ENCODE measurements at regions of chr1 and their contacts with region 1.

Region 1: DNA sequence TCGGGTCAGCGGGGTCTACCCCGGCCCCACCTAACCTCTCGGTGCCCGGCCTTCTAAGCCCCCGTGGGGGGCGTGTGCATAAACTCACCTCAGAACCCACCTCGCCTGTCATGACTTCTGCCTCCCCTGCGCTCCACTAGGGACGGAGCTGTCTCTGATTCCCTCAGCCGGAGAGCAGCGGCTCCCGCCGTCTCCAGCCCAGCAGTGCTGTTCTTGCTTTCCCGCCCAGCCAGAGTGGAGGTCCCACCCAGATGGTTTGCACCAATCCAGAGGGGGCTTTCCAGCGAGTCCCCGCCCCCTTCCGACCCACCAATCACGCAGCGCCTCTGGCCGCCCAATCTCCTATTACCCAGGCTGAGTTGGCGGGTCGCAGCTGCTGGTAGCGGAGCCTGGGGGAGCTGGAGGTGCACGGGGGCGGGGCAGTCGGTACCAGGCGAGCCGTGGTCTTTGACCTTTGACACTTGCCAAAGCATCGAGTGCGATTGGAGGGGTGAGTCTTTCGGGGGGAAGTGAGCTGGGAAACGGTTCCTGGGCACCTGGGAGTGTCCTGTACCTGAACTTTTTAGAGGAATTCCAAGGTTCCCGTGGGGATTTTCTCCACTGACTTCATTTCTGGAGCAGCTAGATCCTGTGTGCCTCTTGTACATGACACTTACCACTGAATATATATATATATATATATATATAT is at the start of gene CLSPN:
- DNase-seq: peak; percentile 96
- H3K4me3 Mint-ChIP-seq: peak within 1 kb of the TSS; percentile 99
- H3K27ac Mint-ChIP-seq: peak within 1 kb of the TSS; percentile 69
- H3K4me1 Mint-ChIP-seq: no peaks in the 10 kb centered on the region
- H3K27me3 Mint-ChIP-seq: no peaks in the 10 kb centered on the region
- CTCF ChIP-seq: no peak
- total RNA-seq, gene CLSPN: 1.6 and 4.3 TPM in 2 replicates

Region 2: GRCh38 chr1:35557292-35558063 is 212.4 kb before region 1 on chr1 and contains the starts of genes KIAA0319L and NCDN:
- CTCF ChIA-PET with region 1: interaction called, 5 read pairs
- POLR2A ChIA-PET with region 1: interaction called, 23 read pairs
- intact Hi-C with region 1: no loop called
- DNase-seq: peak; percentile 97
- H3K4me3 Mint-ChIP-seq: peak within 1 kb of the TSS; percentile 94
- H3K27ac Mint-ChIP-seq: peak within 1 kb of the TSS; percentile 93
- H3K4me1 Mint-ChIP-seq: peaks cover 50% of the 10 kb centered on the region
- H3K27me3 Mint-ChIP-seq: no peaks in the 10 kb centered on the region
- CTCF ChIP-seq: no peak
- total RNA-seq, gene KIAA0319L: 50.7 and 56.8 TPM in 2 replicates
- total RNA-seq, gene NCDN: 31.4 and 31.5 TPM in 2 replicates

Region 3: GRCh38 chr1:35564037-35564883 is 205.6 kb before region 1 on chr1:
- CTCF ChIA-PET with region 1: interaction called, 20 read pairs
- POLR2A ChIA-PET with region 1: interaction called, 11 read pairs
- intact Hi-C with region 1: loop called (anchors 1 kb)
- DNase-seq: peak; percentile 90
- H3K4me3 Mint-ChIP-seq: no peak overlapping the region
- H3K27ac Mint-ChIP-seq: no peak overlapping the region
- H3K4me1 Mint-ChIP-seq: peaks cover 32% of the 10 kb centered on the region
- H3K27me3 Mint-ChIP-seq: no peaks in the 10 kb centered on the region
- CTCF ChIP-seq: peak; percentile 79

Region 4: GRCh38 chr1:35569936-35570335 is 200.0 kb before region 1 on chr1:
- CTCF ChIA-PET with region 1: interaction called, 20 read pairs
- POLR2A ChIA-PET with region 1: interaction called, 11 read pairs
- intact Hi-C with region 1: loop called (anchors 1 kb)
- DNase-seq: no peak
- H3K4me3 Mint-ChIP-seq: no peak overlapping the region
- H3K27ac Mint-ChIP-seq: no peak overlapping the region
- H3K4me1 Mint-ChIP-seq: peaks cover 18% of the 10 kb centered on the region
- H3K27me3 Mint-ChIP-seq: peaks cover 9% of the 10 kb centered on the region
- CTCF ChIP-seq: no peak

Region 5: DNA sequence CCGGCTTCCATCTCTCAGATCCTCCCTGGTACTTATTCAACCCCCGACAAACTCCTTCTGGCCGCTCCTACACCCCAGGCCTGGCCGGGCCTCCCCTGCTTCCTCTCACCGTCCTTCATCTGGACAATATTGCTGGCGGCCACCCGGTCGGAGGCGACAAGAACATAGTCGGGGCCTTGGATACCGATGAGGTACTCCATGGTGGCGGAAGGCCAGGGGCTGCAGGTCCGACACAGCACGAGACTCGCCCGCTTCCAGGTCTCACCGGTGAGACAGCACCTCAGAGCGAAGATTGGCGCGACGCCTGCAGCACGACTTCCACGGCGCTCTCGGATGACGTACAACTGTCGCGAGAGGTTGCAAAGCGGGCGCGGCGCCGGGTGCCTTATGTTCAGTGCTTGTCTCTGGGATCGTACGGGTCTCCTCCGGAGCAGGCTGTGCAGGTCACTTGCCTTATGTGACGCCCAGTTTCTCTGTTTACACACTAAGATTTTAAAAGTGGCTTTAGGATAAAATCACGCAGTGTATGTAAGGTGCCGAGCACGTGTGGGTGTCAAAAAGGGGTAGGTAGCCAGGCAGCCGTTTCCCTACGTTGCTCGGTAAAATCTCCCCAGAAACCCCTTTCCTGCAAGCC is 128.6 kb before region 1 on chr1 and contains the start of gene PSMB2:
- CTCF ChIA-PET with region 1: no interaction called
- POLR2A ChIA-PET with region 1: interaction called, 10 read pairs
- intact Hi-C with region 1: no loop called
- DNase-seq: peak; percentile 96
- H3K4me3 Mint-ChIP-seq: peak within 1 kb of the TSS; percentile 99
- H3K27ac Mint-ChIP-seq: peak within 1 kb of the TSS; percentile 100
- H3K4me1 Mint-ChIP-seq: peaks cover 7% of the 10 kb centered on the region
- H3K27me3 Mint-ChIP-seq: peaks cover 12% of the 10 kb centered on the region
- CTCF ChIP-seq: no peak
- total RNA-seq, gene PSMB2: 82.6 and 93.9 TPM in 2 replicates

Region 6: GRCh38 chr1:35747938-35748702 is 21.8 kb before region 1 on chr1:
- CTCF ChIA-PET with region 1: interaction called, 4 read pairs
- POLR2A ChIA-PET with region 1: interaction called, 20 read pairs
- intact Hi-C with region 1: no loop called
- DNase-seq: no peak
- H3K4me3 Mint-ChIP-seq: no peak overlapping the region
- H3K27ac Mint-ChIP-seq: no peak overlapping the region
- H3K4me1 Mint-ChIP-seq: no peaks in the 10 kb centered on the region
- H3K27me3 Mint-ChIP-seq: no peaks in the 10 kb centered on the region
- CTCF ChIP-seq: no peak

Region 7: GRCh38 chr1:35930593-35931445 is 160.9 kb after region 1 on chr1 and contains the start of gene AGO3:
- CTCF ChIA-PET with region 1: no interaction called
- POLR2A ChIA-PET with region 1: interaction called, 14 read pairs
- intact Hi-C with region 1: no loop called
- DNase-seq: peak; percentile 85
- H3K4me3 Mint-ChIP-seq: peak within 1 kb of the TSS; percentile 82
- H3K27ac Mint-ChIP-seq: peak within 1 kb of the TSS; percentile 93
- H3K4me1 Mint-ChIP-seq: peaks cover 19% of the 10 kb centered on the region
- H3K27me3 Mint-ChIP-seq: no peaks in the 10 kb centered on the region
- CTCF ChIP-seq: no peak
- total RNA-seq, gene AGO3: 27.3 and 31.6 TPM in 2 replicates